Astrocyte of the cerebellum (primary cell): ENCODE measurements at regions of chr9 and their contacts with region 1.

Region 1: GRCh38 chr9:115000217-115000639 is 69.8 kb upstream of the TNFSF8 start:
- DNase-seq: no peak
- H3K4me3 ChIP-seq: no peak overlapping the region
- CTCF ChIP-seq: no peak

Region 2: GRCh38 chr9:114721491-114722079 is 278.6 kb before region 1 on chr9:
- in situ Hi-C with region 1: loop called (anchors 5 kb)
- DNase-seq: no peak
- H3K4me3 ChIP-seq: no peak overlapping the region
- CTCF ChIP-seq: no peak